IMR-90 (cell line): ENCODE measurements at regions of chr1 and their contacts with region 1.

Region 1: GRCh38 chr1:59759156-59759925 is 55.4 kb upstream of the HOOK1 start:
- DNase-seq: peak; percentile 83
- ATAC-seq: peak; percentile 97
- H3K4me3 ChIP-seq: no peak overlapping the region
- H3K27ac ChIP-seq: peak overlapping the region; percentile 60
- H3K4me1 ChIP-seq: peaks cover 2% of the 10 kb centered on the region; the same call in 1 of the 2 replicates
- H3K27me3 ChIP-seq: no peaks in the 10 kb centered on the region; the same call in 1 of the 2 replicates
- CTCF ChIP-seq: peak; percentile 98
- POLR2A ChIP-seq: peak; percentile 79
- RAD21 ChIP-seq: peak; percentile 100

Region 2: DNA sequence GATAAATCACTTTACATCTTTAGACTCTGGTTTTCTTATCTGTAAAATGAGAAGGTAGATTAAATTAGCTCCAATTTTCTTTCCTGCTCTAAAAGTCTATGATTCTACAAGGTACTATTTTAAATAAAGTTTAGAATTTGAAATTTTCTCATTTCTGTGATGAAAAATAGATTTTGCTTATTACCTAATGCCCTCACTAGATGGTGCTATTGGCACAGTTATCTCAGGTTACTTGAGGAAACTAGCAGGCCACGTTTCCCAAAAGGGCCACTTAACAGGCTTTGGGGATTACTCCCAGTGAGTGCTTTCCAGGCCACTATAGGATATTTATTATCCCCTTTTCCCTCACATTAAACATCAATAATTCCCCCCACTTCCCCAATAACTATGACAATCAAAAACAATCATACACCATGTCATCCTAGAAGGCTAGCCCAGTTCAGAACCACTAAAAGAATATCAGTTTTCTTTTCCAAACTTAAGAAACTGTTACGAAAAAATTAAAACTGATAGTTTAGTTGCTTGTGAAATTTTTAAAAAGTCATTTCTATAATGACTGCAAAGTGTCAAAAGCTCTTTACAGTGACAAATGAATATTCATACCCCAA is 1243.4 kb before region 1 on chr1:
- CTCF ChIA-PET with region 1: interaction called, 3 read pairs
- POLR2A ChIA-PET with region 1: no interaction called
- dilution Hi-C with region 1: no loop called
- in situ Hi-C with region 1: loop called (anchors 25 kb)
- intact Hi-C with region 1: loop called (anchors 10 kb)
- DNase-seq: peak; percentile 85
- ATAC-seq: peak; percentile 79
- H3K4me3 ChIP-seq: no peak overlapping the region
- H3K27ac ChIP-seq: no peak overlapping the region
- H3K4me1 ChIP-seq: no peaks in the 10 kb centered on the region
- H3K27me3 ChIP-seq: no peaks in the 10 kb centered on the region
- CTCF ChIP-seq: peak; percentile 85
- POLR2A ChIP-seq: no peak
- RAD21 ChIP-seq: peak; percentile 86

Region 3: DNA sequence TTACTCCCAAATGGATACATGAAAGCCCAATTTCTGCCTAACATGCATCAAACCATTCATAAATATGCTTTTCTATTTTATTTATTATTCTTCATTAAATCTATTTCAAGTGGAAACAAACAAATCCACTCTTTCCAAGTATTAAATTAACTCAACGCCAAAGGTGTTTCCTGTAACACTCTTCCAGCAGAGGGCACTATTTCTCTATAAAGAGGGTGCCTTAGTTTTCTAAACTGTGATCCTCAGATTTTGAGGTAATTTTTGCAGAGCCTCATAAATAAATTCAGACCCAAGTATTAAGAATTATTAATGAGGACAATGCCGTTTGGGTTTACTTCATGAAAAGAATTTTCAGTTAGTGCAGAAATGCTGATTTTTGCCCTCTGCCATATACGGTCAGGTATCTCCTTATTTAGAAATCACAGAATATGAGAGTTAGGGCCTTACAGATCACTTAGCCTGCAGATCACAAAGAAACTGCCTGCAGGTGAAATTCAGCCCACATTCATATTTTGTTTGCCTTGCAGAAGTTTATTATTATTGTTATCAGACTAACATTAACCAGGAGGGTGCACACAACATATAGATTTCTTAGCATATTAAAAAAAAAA is 1019.4 kb before region 1 on chr1:
- CTCF ChIA-PET with region 1: interaction called, 11 read pairs
- POLR2A ChIA-PET with region 1: no interaction called
- dilution Hi-C with region 1: loop called (anchors 25 kb)
- in situ Hi-C with region 1: loop called (anchors 5 kb)
- intact Hi-C with region 1: loop called (anchors 1 kb)
- DNase-seq: peak; percentile 71
- ATAC-seq: peak; percentile 64; the same call in 1 of the 2 replicates
- H3K4me3 ChIP-seq: no peak overlapping the region
- H3K27ac ChIP-seq: no peak overlapping the region
- H3K4me1 ChIP-seq: no peaks in the 10 kb centered on the region
- H3K27me3 ChIP-seq: no peaks in the 10 kb centered on the region
- CTCF ChIP-seq: peak; percentile 93
- POLR2A ChIP-seq: no peak
- RAD21 ChIP-seq: peak; percentile 94

Region 4: DNA sequence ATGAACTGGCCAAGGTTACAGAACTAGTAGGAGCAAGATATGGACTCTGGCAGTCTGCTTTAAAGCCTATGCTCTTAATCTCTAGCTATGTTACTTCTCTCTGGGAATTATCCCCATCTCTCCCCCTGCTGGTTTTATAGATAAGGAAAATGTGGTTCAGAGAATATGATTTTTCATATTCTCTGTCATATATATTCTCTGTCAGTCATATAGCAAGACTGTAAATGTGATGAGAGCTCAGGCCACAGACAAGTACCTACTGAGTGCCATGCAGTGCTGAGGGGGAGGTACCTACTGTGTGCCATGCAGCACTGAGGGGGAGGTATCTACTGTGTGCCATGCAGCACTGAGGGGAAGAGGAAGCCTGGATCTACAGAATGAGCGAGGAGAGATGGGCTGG is 682.7 kb before region 1 on chr1:
- CTCF ChIA-PET with region 1: no interaction called
- POLR2A ChIA-PET with region 1: no interaction called
- dilution Hi-C with region 1: no loop called
- in situ Hi-C with region 1: no loop called
- intact Hi-C with region 1: loop called (anchors 10 kb)
- DNase-seq: peak; percentile 34
- ATAC-seq: peak; percentile 76
- H3K4me3 ChIP-seq: no peak overlapping the region
- H3K27ac ChIP-seq: no peak overlapping the region
- H3K4me1 ChIP-seq: peaks cover 4% of the 10 kb centered on the region
- H3K27me3 ChIP-seq: no peaks in the 10 kb centered on the region
- CTCF ChIP-seq: peak; percentile 41; the same call in 1 of the 2 replicates
- POLR2A ChIP-seq: no peak
- RAD21 ChIP-seq: peak; percentile 47

Region 5: DNA sequence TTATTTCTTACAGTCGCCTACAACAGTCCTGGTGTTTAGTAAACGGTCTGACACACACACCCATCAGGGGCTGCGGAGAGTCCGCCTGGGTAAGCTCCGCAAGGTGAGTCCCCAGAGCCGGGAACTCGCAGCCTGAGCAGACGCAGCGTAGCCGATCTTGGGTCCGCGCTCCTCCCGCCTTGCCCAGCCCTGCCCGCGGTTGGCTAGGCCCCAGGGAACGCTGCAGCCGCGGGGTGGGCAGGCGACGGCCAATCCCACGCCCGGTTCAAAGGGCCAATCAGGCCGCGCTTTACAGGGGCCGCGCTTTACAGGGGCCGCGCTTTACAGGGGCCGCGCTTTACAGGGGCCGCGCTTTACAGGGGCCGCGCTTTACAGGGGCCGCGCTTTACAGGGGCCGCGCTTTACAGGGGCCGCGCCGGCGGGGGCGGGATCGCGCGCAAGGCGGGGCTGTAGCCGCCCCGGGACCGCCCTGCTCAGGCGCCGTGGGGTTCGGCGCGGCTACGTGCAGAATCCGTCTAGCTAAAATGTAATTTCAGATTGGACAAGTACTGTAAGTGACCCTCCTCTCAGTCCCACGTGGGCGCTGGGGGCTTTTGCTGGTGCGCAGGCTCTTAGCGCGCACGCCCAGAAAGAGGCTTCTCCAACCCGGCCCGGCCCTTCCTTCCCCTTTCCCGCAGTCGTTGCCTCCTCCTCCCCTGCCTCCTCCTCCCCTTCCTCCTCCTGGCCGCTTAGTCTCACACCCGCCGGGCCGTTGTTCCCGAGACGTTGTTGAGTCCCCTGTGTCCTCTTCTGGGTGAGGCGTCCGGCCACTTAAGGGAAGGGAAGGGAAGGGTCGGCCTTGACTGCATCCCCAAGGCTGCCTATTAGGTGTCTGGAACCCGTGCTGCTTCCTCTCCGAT is 462.7 kb before region 1 on chr1 and contains the start of gene FGGY:
- CTCF ChIA-PET with region 1: no interaction called
- POLR2A ChIA-PET with region 1: no interaction called
- dilution Hi-C with region 1: no loop called
- in situ Hi-C with region 1: no loop called
- intact Hi-C with region 1: loop called (anchors 1 kb)
- DNase-seq: peak; percentile 98
- ATAC-seq: peak; percentile 93
- H3K4me3 ChIP-seq: peak within 1 kb of the TSS; percentile 74
- H3K27ac ChIP-seq: peak within 1 kb of the TSS; percentile 99
- H3K4me1 ChIP-seq: peaks cover 6% of the 10 kb centered on the region
- H3K27me3 ChIP-seq: no peaks in the 10 kb centered on the region
- CTCF ChIP-seq: no peak
- POLR2A ChIP-seq: peak; percentile 84
- RAD21 ChIP-seq: peak; percentile 29; the same call in 1 of the 2 replicates
- total RNA-seq, gene FGGY: 12.8 and 14.0 TPM in 2 replicates

Region 6: GRCh38 chr1:59699227-59699847 is 60.0 kb before region 1 on chr1:
- CTCF ChIA-PET with region 1: interaction called, 14 read pairs
- POLR2A ChIA-PET with region 1: no interaction called
- dilution Hi-C with region 1: no loop called
- in situ Hi-C with region 1: no loop called
- intact Hi-C with region 1: loop called (anchors 1 kb)
- DNase-seq: peak; percentile 57
- ATAC-seq: 0 out of 2 replicates have a peak, but pooled peaks have one; percentile 19
- H3K4me3 ChIP-seq: no peak overlapping the region
- H3K27ac ChIP-seq: no peak overlapping the region
- H3K4me1 ChIP-seq: peaks cover 21% of the 10 kb centered on the region
- H3K27me3 ChIP-seq: no peaks in the 10 kb centered on the region
- CTCF ChIP-seq: peak; percentile 91
- POLR2A ChIP-seq: 0 out of 2 replicates have a peak, but pooled peaks have one; percentile 35
- RAD21 ChIP-seq: peak; percentile 97

Region 7: GRCh38 chr1:60359431-60359830 is 600.1 kb after region 1 on chr1:
- CTCF ChIA-PET with region 1: no interaction called
- POLR2A ChIA-PET with region 1: no interaction called
- dilution Hi-C with region 1: no loop called
- in situ Hi-C with region 1: no loop called
- intact Hi-C with region 1: no loop called
- DNase-seq: no peak
- ATAC-seq: no peak
- H3K4me3 ChIP-seq: no peak overlapping the region
- H3K27ac ChIP-seq: no peak overlapping the region
- H3K4me1 ChIP-seq: no peaks in the 10 kb centered on the region
- H3K27me3 ChIP-seq: no peaks in the 10 kb centered on the region
- CTCF ChIP-seq: no peak
- POLR2A ChIP-seq: no peak
- RAD21 ChIP-seq: no peak